Ovary (tissue), 10 donors: ENCODE measurements at regions of chr18 and their contacts with region 1.

Region 1: DNA sequence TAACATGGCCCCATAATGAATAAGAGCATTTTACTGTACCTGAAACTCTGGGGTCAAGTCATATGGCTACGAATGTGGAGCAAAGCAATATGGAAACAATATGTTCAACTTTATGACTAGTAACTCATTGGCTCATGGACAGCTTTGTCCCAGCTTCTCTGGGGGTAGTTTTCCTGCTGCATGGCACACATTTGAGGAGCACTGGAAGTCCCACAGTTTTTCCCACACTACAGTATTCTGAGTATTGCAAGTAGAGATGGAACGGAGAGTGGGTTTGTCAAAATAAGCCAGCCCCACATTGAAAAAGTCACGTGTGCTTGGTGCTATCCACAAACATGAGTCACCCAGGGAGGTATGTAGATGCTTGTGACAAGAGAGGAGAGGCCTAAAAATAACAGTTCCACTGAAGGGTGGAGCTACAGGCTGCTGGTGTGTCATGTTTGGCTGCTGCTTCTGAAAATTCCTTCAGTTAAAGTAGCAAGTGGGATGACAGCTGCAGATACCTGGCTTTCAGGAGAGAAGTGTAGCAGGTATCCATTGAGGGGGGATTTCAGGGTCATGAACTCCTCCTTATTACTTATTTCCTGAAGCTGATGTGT is 48.2 kb upstream of the CTAGE1 start:
- DNase-seq: peak in 2 of 5 donors; percentile 35 to 56
- H3K4me3 ChIP-seq: no peak overlapping the region
- H3K27ac ChIP-seq: peak overlapping the region in 1 of 2 donors; percentile 3
- H3K4me1 ChIP-seq: peaks cover 24% of the 10 kb centered on the region
- H3K27me3 ChIP-seq: no peaks in the 10 kb centered on the region
- CTCF ChIP-seq: no peak
- EP300 ChIP-seq: no peak
- POLR2A ChIP-seq: no peak

Region 2: DNA sequence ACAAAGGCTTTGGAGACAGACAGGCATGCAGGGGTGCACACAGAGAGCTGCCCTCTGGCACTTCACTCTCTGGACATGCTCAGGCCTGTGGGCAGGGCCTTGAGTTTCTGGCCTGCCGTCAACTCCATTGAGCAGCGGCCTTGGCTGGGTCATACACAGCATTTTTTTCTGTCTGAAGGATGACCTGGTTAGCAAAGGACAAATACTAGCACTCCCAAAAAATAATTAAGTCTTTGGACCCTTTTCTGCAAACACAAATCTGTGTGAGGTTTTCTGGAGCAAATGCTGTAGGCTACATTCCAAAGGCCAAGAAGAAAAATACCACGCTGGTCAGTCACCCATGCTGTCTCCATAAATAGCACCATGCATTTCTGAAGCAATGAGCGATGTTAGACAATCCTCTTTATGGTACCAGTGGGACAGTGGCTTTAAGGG is 76.5 kb after region 1 on chr18:
- intact Hi-C with region 1: loop called in 1 of 4 experiments (anchors 10 kb)
- DNase-seq: peak in 4 of 5 donors; percentile 42 to 68 (median 56)
- H3K4me3 ChIP-seq: no peak overlapping the region
- H3K27ac ChIP-seq: peak overlapping the region in 1 of 2 donors; percentile 22
- H3K4me1 ChIP-seq: peaks cover 16% of the 10 kb centered on the region
- H3K27me3 ChIP-seq: no peaks in the 10 kb centered on the region
- CTCF ChIP-seq: no peak
- EP300 ChIP-seq: no peak
- POLR2A ChIP-seq: no peak